T-cell (primary cell): ENCODE measurements at regions of chr6 and their contacts with region 1.

Region 1: GRCh38 chr6:136226027-136226673 is 24.0 kb downstream of the MTFR2 start:
- DNase-seq: peak; percentile 4 to 76 (median 41)
- ATAC-seq: peak; percentile 82 to 88 (median 84)
- H3K4me3 ChIP-seq: no peak overlapping the region
- H3K4me3 Mint-ChIP-seq: peak overlapping the region; percentile 48 to 54 (median 53)
- H3K27ac ChIP-seq: no peak overlapping the region
- H3K27ac Mint-ChIP-seq: no peak overlapping the region
- H3K4me1 ChIP-seq: no peaks in the 10 kb centered on the region
- H3K4me1 Mint-ChIP-seq: peaks cover 0 to 6% (median 3%) of the 10 kb centered on the region in 3 donors
- H3K27me3 ChIP-seq: no peaks in the 10 kb centered on the region
- H3K27me3 Mint-ChIP-seq: no peaks in the 10 kb centered on the region

Region 2: GRCh38 chr6:134691180-134691579 is 1535.0 kb before region 1 on chr6:
- CTCF ChIA-PET with region 1: interaction called in 1 of 2 experiments, 11 read pairs
- POLR2A ChIA-PET with region 1: no interaction called
- DNase-seq: no peak
- ATAC-seq: no peak
- H3K4me3 ChIP-seq: no peak overlapping the region
- H3K4me3 Mint-ChIP-seq: no peak overlapping the region
- H3K27ac ChIP-seq: no peak overlapping the region
- H3K27ac Mint-ChIP-seq: no peak overlapping the region
- H3K4me1 ChIP-seq: no peaks in the 10 kb centered on the region
- H3K4me1 Mint-ChIP-seq: no peaks in the 10 kb centered on the region
- H3K27me3 ChIP-seq: peaks cover 0 to 16% of the 10 kb centered on the region in 2 experiments
- H3K27me3 Mint-ChIP-seq: peaks cover 17 to 27% of the 10 kb centered on the region in 2 donors

Region 3: GRCh38 chr6:135506270-135506997 is 719.7 kb before region 1 on chr6:
- CTCF ChIA-PET with region 1: interaction called, 4 to 16 read pairs
- POLR2A ChIA-PET with region 1: no interaction called
- DNase-seq: peak in 5 of 35 experiments; percentile 3 to 73 (median 4)
- ATAC-seq: peak; percentile 65 to 80 (median 75)
- H3K4me3 ChIP-seq: no peak overlapping the region
- H3K4me3 Mint-ChIP-seq: no peak overlapping the region
- H3K27ac ChIP-seq: no peak overlapping the region
- H3K27ac Mint-ChIP-seq: no peak overlapping the region
- H3K4me1 ChIP-seq: no peaks in the 10 kb centered on the region
- H3K4me1 Mint-ChIP-seq: peaks cover 0 to 4% (median 2%) of the 10 kb centered on the region in 3 donors
- H3K27me3 ChIP-seq: no peaks in the 10 kb centered on the region
- H3K27me3 Mint-ChIP-seq: no peaks in the 10 kb centered on the region

Region 4: DNA sequence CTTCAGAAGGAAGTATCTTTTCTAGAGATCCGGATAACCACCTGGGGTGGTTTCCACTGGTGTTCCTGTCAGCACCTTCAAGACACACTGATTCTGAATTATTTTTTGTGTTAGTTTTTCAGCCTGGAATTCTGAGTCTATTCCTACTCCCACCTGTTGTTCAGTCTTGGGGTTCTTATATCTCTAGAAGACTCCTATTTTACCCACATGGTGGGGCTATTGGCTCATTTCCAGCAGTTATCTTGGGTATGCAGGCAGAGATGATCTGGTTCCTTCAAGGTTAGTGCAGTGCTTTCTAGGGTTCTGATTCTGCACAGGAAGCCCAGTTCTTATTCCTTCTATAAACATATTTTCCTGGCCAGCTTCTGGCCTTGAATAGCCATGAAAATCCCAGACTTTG is 550.3 kb before region 1 on chr6:
- CTCF ChIA-PET with region 1: interaction called, 11 to 12 read pairs
- POLR2A ChIA-PET with region 1: no interaction called
- DNase-seq: peak in 30 of 35 experiments; percentile 4 to 78 (median 26)
- ATAC-seq: peak in 3 of 4 experiments; percentile 77 to 84 (median 78)
- H3K4me3 ChIP-seq: no peak overlapping the region
- H3K4me3 Mint-ChIP-seq: no peak overlapping the region
- H3K27ac ChIP-seq: no peak overlapping the region
- H3K27ac Mint-ChIP-seq: no peak overlapping the region
- H3K4me1 ChIP-seq: no peaks in the 10 kb centered on the region
- H3K4me1 Mint-ChIP-seq: no peaks in the 10 kb centered on the region
- H3K27me3 ChIP-seq: no peaks in the 10 kb centered on the region
- H3K27me3 Mint-ChIP-seq: no peaks in the 10 kb centered on the region

Region 5: GRCh38 chr6:136077834-136078576 is 148.1 kb before region 1 on chr6:
- CTCF ChIA-PET with region 1: no interaction called
- POLR2A ChIA-PET with region 1: no interaction called
- DNase-seq: no peak
- ATAC-seq: no peak
- H3K4me3 ChIP-seq: no peak overlapping the region
- H3K4me3 Mint-ChIP-seq: no peak overlapping the region
- H3K27ac ChIP-seq: no peak overlapping the region
- H3K27ac Mint-ChIP-seq: no peak overlapping the region
- H3K4me1 ChIP-seq: no peaks in the 10 kb centered on the region
- H3K4me1 Mint-ChIP-seq: no peaks in the 10 kb centered on the region
- H3K27me3 ChIP-seq: no peaks in the 10 kb centered on the region
- H3K27me3 Mint-ChIP-seq: peaks cover 0 to 4% of the 10 kb centered on the region in 2 donors

Region 6: DNA sequence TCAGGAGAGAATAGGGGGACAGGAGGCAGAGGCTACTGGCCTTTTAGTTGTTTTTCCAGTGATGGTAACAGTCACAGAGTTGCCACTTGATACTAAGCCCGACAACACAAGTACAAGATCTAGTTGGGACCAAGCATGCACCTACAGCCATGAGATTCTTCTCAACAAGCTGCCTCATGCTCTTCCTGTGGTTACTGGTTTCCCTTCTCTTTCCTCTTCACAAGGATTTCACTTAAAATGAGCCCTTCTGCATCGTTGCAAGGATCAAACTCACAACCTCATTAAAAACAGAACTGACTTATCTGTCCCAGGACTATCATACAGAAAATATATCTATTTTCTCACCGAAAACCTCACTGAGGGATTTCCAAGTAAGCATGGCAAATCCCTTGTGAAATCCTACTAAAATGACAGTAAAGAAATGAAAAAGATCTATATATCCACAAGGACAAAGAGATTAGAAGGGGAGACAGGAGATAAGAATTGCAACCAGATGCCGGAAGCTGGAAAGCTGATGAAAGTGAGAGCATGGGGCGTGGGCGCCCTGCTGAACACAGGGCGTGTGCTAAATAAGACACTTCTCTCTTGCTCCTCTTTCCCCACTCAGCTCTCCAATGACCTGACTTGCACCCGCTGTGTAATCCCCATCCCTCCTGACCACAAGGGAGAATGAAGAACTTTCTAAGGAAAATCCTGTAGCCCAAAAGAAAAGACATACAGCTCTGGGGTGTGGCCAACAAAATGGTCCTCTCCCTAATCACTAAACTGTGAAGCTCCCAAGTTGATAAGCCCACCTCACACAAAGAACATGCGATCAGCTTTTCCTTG is 10.5 kb after region 1 on chr6:
- CTCF ChIA-PET with region 1: interaction called, 5 to 17 read pairs
- POLR2A ChIA-PET with region 1: interaction called in 1 of 2 experiments, 4 read pairs
- DNase-seq: no peak
- ATAC-seq: no peak
- H3K4me3 ChIP-seq: no peak overlapping the region
- H3K4me3 Mint-ChIP-seq: no peak overlapping the region
- H3K27ac ChIP-seq: no peak overlapping the region
- H3K27ac Mint-ChIP-seq: no peak overlapping the region
- H3K4me1 ChIP-seq: peaks cover 0 to 8% of the 10 kb centered on the region in 2 experiments
- H3K4me1 Mint-ChIP-seq: peaks cover 9 to 14% (median 14%) of the 10 kb centered on the region in 3 donors
- H3K27me3 ChIP-seq: no peaks in the 10 kb centered on the region
- H3K27me3 Mint-ChIP-seq: no peaks in the 10 kb centered on the region